ENCODE measurements at regions of chr1 and their contacts with region 1.

Region 1: GRCh38 chr1:168734946-168735345 is 5.9 kb upstream of the DPT start:
- DNase-seq: no peak

Region 2: GRCh38 chr1:168774241-168774640 is 39.3 kb after region 1 on chr1:
- intact Hi-C with region 1: loop called (anchors 5 kb)
- DNase-seq: peak; percentile 80

Region 3: GRCh38 chr1:169193191-169193850 is 458.4 kb after region 1 on chr1:
- intact Hi-C with region 1: loop called (anchors 10 kb)
- DNase-seq: no peak